ENCODE measurements at regions of chr1 and their contacts with region 1.

Region 1: GRCh38 chr1:153633716-153634665 is at the start of gene CHTOP:
- DNase-seq: peak; percentile 100
- ATAC-seq: peak; percentile 88
- H3K4me3 ChIP-seq: peak within 1 kb of the TSS; percentile 83
- H3K27ac ChIP-seq: peak within 1 kb of the TSS; percentile 97
- H3K4me1 ChIP-seq: peaks cover 18% of the 10 kb centered on the region
- H3K27me3 ChIP-seq: no peaks in the 10 kb centered on the region
- CTCF ChIP-seq: no peak
- total RNA-seq, gene CHTOP: 101 and 112 TPM in 2 replicates

Region 2: DNA sequence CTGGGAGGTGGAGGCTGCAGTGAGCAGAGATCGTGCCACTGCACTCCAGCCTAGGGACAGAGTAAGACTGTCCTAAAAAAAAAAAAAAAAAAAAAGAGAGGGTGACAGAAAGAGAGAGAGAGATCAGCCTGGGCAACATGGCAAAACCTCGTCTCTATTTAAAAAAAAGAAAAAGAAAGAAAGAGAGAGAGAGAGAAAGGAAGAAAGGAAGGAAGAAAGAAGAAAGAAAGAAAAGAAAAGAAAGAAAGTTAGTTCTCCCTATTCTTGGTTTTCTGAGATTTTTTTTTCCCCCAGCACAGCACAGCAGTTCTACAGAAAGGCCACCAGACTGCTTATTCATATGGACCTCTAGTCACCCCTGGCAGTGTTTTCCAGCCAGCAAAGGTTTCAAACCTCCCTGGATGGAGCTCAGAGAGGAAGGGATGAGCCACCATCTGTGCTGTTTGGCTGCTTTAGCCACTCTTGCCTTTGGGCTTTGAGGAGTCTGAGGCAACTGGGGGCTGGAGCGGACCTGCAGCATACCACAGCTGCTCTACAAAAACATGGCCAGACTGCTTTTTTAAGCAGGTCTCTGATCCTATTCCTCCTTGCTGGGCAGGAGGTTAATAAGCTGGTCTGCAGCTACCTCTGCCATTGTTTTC is 108.8 kb before region 1 on chr1:
- CTCF ChIA-PET with region 1: no interaction called
- POLR2A ChIA-PET with region 1: no interaction called
- intact Hi-C with region 1: no loop called
- DNase-seq: no peak
- ATAC-seq: peak; percentile 6; the same call in 1 of the 2 replicates
- H3K4me3 ChIP-seq: no peak overlapping the region
- H3K27ac ChIP-seq: no peak overlapping the region
- H3K4me1 ChIP-seq: peaks cover 11% of the 10 kb centered on the region
- H3K27me3 ChIP-seq: no peaks in the 10 kb centered on the region
- CTCF ChIP-seq: no peak

Region 3: GRCh38 chr1:153649863-153650235 is 15.9 kb after region 1 on chr1:
- CTCF ChIA-PET with region 1: no interaction called
- POLR2A ChIA-PET with region 1: interaction called, 10 read pairs
- intact Hi-C with region 1: no loop called
- DNase-seq: peak; percentile 76
- ATAC-seq: peak; percentile 76
- H3K4me3 ChIP-seq: no peak overlapping the region
- H3K27ac ChIP-seq: no peak overlapping the region
- H3K4me1 ChIP-seq: peaks cover 14% of the 10 kb centered on the region
- H3K27me3 ChIP-seq: no peaks in the 10 kb centered on the region
- CTCF ChIP-seq: no peak

Region 4: DNA sequence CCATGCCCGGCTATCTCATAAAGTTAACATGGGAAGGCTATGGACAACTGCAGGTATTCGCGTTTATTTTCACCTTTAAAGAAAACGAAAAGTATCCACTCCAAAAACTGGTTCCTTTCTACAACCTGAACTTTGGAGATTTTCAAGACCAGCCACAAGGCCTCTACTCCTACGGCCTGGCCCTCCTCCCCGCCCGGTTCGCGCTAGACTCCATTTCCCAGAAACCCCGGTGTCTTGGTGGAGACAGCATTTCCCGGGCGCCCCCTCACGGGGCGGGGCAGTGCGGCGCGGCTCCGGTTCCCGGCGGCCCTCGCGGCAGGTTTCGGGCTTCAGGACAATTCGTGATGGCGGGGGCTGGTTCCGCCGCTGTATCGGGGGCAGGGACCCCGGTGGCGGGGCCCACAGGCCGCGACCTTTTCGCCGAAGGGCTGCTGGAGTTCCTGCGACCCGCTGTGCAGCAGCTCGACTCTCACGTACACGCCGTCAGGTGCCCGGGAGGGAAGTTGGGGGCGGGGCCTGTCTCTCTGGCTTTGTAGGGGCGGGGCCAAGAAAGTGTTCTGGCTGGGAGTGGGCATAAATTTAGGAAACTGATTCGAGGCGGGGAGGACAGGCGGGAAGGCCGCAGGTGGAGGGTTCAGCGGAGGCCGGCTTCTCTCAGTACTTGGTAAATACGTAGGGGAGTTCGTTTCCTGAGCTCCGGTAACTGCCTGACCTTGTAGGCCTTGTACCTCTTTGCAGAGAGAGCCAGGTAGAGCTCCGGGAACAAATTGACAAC is 24.6 kb after region 1 on chr1 and contains the start of gene SNAPIN:
- CTCF ChIA-PET with region 1: no interaction called
- POLR2A ChIA-PET with region 1: interaction called, 3 read pairs
- intact Hi-C with region 1: loop called (anchors 2 kb)
- DNase-seq: peak; percentile 92
- ATAC-seq: peak; percentile 93
- H3K4me3 ChIP-seq: peak within 1 kb of the TSS; percentile 89
- H3K27ac ChIP-seq: peak within 1 kb of the TSS; percentile 62
- H3K4me1 ChIP-seq: peaks cover 14% of the 10 kb centered on the region; the same call in 1 of the 2 replicates
- H3K27me3 ChIP-seq: no peaks in the 10 kb centered on the region
- CTCF ChIP-seq: no peak; the same call in 1 of the 2 replicates
- total RNA-seq, gene SNAPIN: 46.4 and 82.0 TPM in 2 replicates

Region 5: DNA sequence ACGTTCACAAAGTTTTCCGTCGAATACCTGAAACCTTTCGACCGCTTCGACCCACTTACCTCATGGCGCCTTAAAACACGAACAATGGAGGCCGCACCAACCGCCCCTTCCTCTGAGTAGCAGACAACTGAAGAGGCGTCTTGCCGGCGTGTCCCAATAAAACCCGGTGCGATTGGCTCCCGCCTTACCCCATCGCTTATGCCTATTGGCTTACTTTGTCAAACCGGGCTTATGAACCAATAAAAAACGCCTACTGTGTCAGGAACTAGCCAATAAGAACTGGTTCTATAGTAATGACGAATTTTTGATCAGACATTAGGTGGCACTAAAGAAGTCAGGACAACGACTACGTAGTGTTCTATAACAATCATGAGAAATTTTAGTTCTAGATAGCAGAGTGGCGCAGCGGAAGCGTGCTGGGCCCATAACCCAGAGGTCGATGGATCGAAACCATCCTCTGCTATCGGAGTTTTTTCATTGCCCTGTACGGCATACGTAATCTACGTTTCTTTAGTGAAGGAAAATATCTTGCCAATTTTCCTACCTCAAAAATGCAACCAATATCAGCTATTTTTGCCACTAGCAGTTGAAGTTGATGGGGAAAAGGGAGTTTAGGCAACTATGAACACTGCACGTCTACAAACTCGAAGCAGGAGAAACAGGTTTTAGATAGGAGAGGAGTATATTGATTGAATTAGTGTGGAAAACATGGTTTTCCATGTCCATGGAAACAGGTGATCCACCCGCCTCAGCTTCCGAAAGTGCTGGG is 37.1 kb after region 1 on chr1 and contains the start of gene ILF2:
- CTCF ChIA-PET with region 1: no interaction called
- POLR2A ChIA-PET with region 1: interaction called, 3 read pairs
- intact Hi-C with region 1: loop called (anchors 1 kb)
- DNase-seq: peak; percentile 100
- ATAC-seq: peak; percentile 87
- H3K4me3 ChIP-seq: peak within 1 kb of the TSS; percentile 89
- H3K27ac ChIP-seq: peak within 1 kb of the TSS; percentile 52
- H3K4me1 ChIP-seq: peaks cover 17% of the 10 kb centered on the region
- H3K27me3 ChIP-seq: no peaks in the 10 kb centered on the region
- CTCF ChIP-seq: peak; percentile 54
- total RNA-seq, gene ILF2: 398 and 439 TPM in 2 replicates

Measured in PC-3 (cell line).